PC-9 (cell line): ENCODE measurements at regions of chr6 and their contacts with region 1.

Region 1: DNA sequence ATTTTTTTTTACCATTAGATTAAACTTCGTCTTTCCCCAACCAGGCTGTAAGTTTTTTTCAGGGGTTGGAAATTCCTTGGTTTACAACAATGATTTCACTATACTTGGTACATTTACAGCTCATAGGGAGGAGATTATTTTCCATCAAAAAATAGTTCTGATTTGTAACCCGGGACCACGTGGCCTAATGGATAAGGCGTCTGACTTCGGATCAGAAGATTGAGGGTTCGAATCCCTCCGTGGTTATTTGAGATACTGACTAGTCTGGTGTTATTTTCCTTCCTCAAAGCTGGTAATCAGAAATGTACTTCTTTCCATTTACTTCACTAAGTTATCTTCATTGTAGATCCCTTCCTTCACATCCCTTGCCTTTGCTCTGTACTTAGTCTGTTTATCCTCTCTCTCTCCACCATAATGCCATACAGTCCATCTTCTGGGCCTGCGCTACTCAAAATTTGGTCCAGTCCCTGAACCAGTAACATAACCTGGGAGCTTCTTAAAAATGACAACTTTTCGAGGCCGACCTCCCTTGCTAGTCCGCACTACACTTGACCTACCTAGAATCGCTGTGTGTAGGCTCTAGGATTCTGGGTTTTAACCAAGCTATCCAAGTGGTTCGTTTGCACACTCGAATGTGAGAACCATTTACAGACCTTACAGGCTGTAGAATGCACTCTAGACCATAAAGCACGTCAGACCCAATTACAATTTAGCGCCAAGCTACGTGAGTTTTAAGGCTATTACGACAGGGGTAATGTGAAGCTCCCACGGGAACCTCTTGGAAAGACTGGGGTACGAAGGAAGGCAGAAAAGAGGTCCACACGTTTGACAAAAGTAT is 42.1 kb upstream of the BTN3A2 start:
- DNase-seq: peak; percentile 77 to 88
- H3K4me3 ChIP-seq: peak overlapping the region; percentile 72
- H3K27ac ChIP-seq: peak overlapping the region; percentile 57
- H3K4me1 ChIP-seq: peaks cover 22% of the 10 kb centered on the region
- H3K27me3 ChIP-seq: no peaks in the 10 kb centered on the region
- CTCF ChIP-seq: no peak

Region 2: DNA sequence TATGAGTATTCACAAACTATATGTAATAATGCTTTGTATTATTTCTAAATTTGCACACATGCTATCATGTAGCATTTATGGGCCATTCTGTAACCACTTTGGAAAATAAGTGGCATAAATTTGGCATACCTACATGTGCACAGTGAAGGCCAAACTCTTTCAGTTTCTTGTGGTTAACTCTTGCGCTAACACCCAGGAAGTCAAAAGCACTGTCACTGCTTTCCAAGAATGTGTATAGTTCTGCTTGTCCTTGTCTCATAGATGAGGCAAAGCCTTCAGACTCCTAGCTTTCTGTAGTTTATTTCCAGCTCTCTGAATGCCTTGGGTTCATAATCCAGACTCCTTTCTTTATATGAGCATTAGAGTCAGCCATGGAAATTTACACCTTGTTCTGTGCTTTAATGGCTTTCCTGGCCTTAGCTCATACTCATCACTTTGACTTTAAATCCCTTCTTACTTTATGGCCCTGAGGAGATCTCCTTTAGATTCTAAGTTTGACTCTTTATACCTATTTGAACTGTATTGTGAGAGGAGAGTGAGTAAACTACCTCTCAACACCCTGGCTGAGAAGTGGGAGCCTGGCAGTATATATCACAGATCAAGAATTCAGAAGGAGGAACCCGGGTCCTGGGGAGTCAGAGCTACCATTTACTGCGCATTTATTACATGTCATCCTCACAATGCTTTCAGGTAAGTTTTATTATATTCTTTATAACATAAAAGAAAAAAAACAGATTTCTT is 447.9 kb before region 1 on chr6:
- CTCF ChIA-PET with region 1: no interaction called
- POLR2A ChIA-PET with region 1: no interaction called
- intact Hi-C with region 1: no loop called
- DNase-seq: no peak
- H3K4me3 ChIP-seq: no peak overlapping the region
- H3K27ac ChIP-seq: no peak overlapping the region
- H3K4me1 ChIP-seq: no peaks in the 10 kb centered on the region
- H3K27me3 ChIP-seq: no peaks in the 10 kb centered on the region
- CTCF ChIP-seq: no peak

Region 3: GRCh38 chr6:26065952-26066380 is 256.9 kb before region 1 on chr6:
- CTCF ChIA-PET with region 1: no interaction called
- POLR2A ChIA-PET with region 1: no interaction called
- intact Hi-C with region 1: loop called (anchors 5 kb)
- DNase-seq: peak; percentile 65 to 79
- H3K4me3 ChIP-seq: no peak overlapping the region
- H3K27ac ChIP-seq: peak overlapping the region; percentile 69
- H3K4me1 ChIP-seq: peaks cover 36% of the 10 kb centered on the region
- H3K27me3 ChIP-seq: no peaks in the 10 kb centered on the region
- CTCF ChIP-seq: peak; percentile 88

Region 4: DNA sequence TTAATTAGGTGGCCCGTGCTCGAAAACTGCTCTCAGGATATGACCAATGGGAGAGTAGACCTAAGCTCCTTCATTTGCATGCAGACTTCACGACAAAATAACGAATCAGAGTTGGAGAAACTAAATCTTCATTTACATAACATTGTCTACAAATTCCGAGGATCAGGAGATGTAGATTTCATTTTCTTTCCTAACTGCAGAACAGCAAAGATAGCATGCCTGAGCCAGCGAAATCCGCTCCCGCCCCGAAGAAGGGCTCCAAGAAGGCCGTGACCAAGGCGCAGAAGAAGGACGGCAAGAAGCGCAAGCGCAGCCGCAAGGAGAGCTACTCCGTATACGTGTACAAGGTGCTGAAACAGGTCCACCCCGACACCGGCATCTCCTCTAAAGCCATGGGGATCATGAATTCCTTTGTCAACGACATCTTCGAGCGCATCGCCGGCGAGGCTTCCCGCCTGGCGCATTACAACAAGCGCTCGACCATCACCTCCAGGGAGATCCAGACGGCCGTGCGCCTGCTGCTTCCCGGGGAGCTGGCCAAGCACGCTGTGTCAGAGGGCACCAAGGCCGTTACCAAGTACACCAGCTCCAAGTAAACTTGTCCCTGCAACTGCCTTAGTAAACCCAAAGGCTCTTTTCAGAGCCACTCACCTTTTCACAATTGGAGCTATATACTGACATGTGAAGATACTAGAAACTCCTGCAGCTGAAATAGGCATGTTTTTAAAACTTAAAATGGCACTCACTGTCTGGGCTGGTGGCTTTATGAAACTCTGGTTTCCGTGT is 139.1 kb before region 1 on chr6:
- CTCF ChIA-PET with region 1: no interaction called
- POLR2A ChIA-PET with region 1: no interaction called
- intact Hi-C with region 1: loop called (anchors 5 kb)
- DNase-seq: peak; percentile 72 to 87
- H3K4me3 ChIP-seq: peak overlapping the region; percentile 54
- H3K27ac ChIP-seq: peak overlapping the region; percentile 65
- H3K4me1 ChIP-seq: peaks cover 12% of the 10 kb centered on the region; the same call in 1 of the 2 replicates
- H3K27me3 ChIP-seq: no peaks in the 10 kb centered on the region
- CTCF ChIP-seq: no peak

Region 5: GRCh38 chr6:26296857-26297648 is 25.8 kb before region 1 on chr6:
- CTCF ChIA-PET with region 1: no interaction called
- POLR2A ChIA-PET with region 1: no interaction called
- intact Hi-C with region 1: no loop called
- DNase-seq: peak in 1 of 2 experiments; percentile 46
- H3K4me3 ChIP-seq: no peak overlapping the region
- H3K27ac ChIP-seq: peak overlapping the region; percentile 75
- H3K4me1 ChIP-seq: peaks cover 28% of the 10 kb centered on the region
- H3K27me3 ChIP-seq: no peaks in the 10 kb centered on the region
- CTCF ChIP-seq: no peak

Region 6: DNA sequence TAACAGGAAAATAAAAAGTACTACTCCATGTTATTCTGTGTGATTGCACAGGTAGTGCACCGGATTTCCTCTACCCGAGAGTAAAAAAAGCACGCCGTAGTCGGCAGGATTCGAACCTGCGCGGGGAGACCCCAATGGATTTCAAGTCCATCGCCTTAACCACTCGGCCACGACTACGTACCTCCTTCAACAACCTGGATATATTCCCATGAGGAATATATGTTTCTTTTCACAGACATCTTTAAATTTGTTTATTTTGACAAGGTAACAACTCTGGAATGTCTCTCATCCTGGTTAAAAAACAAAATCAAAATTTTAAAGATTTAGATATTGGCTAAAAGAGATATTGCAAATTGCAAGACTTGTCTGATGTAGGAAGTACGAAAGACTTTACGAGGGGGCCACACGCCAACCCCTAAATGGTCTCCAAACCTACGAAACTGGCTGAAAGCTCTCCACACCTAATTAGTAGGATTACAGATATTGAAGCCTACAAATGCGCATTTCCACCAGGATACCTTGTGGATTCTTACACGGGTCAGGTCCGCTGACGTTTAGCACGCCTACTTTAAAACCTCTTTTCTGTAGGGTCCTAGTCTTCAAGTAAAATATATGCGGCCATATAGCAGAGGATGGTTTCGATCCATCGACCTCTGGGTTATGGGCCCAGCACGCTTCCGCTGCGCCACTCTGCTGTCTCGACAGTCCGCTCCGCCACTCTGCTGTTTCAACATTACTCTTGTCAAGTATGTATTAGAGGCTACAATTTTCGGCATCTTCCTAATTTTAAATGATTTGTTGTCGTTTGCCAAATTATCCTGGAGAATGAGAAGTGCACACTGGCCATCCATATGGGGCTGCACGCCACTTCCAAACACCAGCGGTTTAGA is 10.1 kb before region 1 on chr6:
- CTCF ChIA-PET with region 1: no interaction called
- POLR2A ChIA-PET with region 1: interaction called, 6 read pairs
- intact Hi-C with region 1: loop called (anchors 1 kb)
- DNase-seq: peak; percentile 74 to 77
- H3K4me3 ChIP-seq: peak overlapping the region; percentile 69
- H3K27ac ChIP-seq: peak overlapping the region; percentile 74
- H3K4me1 ChIP-seq: peaks cover 13% of the 10 kb centered on the region
- H3K27me3 ChIP-seq: no peaks in the 10 kb centered on the region
- CTCF ChIP-seq: no peak